PC-9 (cell line): ENCODE measurements at regions of chr2 and their contacts with region 1.

Region 1: GRCh38 chr2:102717308-102718018 is 44.4 kb upstream of the TMEM182 start:
- DNase-seq: peak in 1 of 2 experiments; percentile 33
- H3K4me3 ChIP-seq: no peak overlapping the region
- H3K27ac ChIP-seq: peak overlapping the region; percentile 8; the same call in 1 of the 2 replicates
- H3K4me1 ChIP-seq: 0 out of 2 replicates have a peak, but pooled peaks cover 9% of the 10 kb centered on the region
- H3K27me3 ChIP-seq: no peaks in the 10 kb centered on the region
- CTCF ChIP-seq: no peak

Region 2: GRCh38 chr2:102442967-102443828 is 274.3 kb before region 1 on chr2:
- CTCF ChIA-PET with region 1: no interaction called
- POLR2A ChIA-PET with region 1: no interaction called
- intact Hi-C with region 1: no loop called
- DNase-seq: peak in 1 of 2 experiments; percentile 39
- H3K4me3 ChIP-seq: no peak overlapping the region
- H3K27ac ChIP-seq: no peak overlapping the region
- H3K4me1 ChIP-seq: peaks cover 8% of the 10 kb centered on the region; the same call in 1 of the 2 replicates
- H3K27me3 ChIP-seq: no peaks in the 10 kb centered on the region
- CTCF ChIP-seq: peak; percentile 84

Region 3: DNA sequence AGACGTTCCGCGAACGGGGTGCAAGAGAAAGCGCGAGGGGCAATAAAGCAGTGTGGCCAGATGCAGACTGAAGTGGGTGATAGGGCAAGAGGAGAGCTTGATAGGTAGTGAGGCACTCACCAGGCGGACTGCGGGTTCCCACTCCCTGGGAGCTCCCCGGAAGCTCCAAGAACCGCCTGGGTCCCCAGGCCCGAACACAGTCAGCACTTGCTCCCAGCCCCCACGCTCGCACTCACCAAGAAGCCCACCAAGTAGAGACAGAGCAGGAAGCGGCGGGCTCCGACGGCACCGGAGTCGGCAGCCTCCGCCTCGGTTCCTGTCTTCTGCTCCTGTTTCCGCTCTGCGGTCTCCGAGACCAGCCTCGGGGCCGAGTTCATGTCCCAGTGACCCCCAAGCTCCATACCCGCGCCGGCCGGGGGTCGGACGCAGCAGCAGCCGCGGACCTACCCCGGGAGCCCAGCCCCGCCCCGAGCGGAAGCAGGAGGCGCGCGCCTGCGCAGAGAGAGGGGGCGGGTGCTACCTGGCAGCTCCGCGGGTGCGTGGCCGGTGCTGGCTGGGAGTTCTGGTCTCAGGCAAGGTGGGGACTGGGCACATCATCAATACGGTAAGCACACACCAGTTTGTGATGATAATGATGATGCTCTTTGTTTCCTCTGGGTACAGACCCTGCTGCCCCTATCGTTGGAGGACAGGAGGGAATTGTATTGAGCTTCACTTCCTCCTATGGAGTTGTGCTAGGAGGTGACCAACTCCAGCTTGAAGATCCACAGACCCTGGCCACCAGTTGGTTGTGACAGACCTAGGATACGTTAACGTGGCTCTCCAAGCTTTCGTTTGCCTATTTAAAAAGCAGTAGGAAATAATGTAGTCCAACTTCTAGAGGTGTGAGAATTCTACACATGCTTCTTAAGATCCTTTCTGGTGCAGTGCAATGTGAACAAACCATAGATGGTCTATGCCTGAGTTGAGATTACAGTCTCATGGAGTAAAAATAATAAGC is 19.2 kb after region 1 on chr2:
- CTCF ChIA-PET with region 1: no interaction called
- POLR2A ChIA-PET with region 1: interaction called, 3 read pairs
- intact Hi-C with region 1: loop called (anchors 2 kb)
- DNase-seq: peak; percentile 53 to 80
- H3K4me3 ChIP-seq: peak overlapping the region; percentile 74
- H3K27ac ChIP-seq: peak overlapping the region; percentile 34
- H3K4me1 ChIP-seq: peaks cover 24% of the 10 kb centered on the region
- H3K27me3 ChIP-seq: no peaks in the 10 kb centered on the region
- CTCF ChIP-seq: no peak